ENCODE measurements at regions of chr3 and their contacts with region 1.

Region 1: DNA sequence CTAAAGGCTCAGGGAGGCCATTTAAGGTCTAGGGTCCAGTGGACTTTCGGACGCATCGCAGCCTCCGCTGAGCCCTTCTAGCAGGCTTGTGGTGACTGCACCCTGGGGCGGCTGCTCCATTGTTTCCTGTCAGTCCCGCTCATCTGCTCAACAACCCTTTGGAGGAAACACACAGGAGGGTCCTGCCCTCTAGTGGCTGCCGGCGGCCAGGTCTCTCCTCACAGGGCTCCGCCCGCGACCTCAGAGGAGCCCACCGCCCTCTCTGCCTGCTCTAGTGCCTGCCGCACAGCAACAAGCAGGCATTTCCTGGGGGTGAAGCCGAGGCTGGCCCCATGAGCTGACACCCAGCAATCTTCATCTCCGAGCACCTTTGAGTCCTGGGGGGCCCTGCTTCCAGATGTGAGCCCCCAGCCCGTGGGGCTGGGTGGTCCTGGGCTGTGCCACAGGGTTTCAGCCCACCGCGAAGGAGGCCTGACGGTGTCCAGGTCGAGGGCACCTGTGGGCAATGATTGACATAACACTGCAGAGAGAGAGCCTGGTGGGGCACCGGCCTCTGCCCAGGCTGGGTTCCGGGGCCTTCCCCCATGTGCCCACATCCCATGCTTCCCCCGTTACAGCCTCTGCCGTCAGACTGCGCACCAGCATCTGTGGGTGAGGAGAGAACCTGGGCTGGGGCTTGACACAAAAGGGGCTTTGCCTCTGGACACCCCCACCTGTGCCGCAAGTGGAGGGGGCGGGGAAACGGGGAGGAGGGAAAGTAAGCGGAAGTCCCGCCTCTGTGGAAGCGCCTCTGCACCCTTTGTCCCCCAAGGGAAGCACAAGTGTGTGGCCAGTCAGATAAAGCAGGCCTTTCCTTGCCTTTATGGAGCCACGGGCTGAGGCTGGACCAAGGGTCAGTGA is 27.0 kb upstream of the SFMBT1 start:
- DNase-seq: peak; percentile 74 to 92 (median 89)
- ATAC-seq: peak; percentile 89
- H3K4me3 ChIP-seq: peak overlapping the region; percentile 72 to 86
- H3K4me3 Mint-ChIP-seq: peak overlapping the region; percentile 89
- H3K27ac ChIP-seq: peak overlapping the region; percentile 65 to 79
- H3K27ac Mint-ChIP-seq: peak overlapping the region; percentile 95
- H3K4me1 ChIP-seq: peaks cover 16% of the 10 kb centered on the region
- H3K4me1 Mint-ChIP-seq: peaks cover 17% of the 10 kb centered on the region
- H3K27me3 ChIP-seq: no peaks in the 10 kb centered on the region
- H3K27me3 Mint-ChIP-seq: no peaks in the 10 kb centered on the region
- CTCF ChIP-seq: peak; percentile 78

Region 2: DNA sequence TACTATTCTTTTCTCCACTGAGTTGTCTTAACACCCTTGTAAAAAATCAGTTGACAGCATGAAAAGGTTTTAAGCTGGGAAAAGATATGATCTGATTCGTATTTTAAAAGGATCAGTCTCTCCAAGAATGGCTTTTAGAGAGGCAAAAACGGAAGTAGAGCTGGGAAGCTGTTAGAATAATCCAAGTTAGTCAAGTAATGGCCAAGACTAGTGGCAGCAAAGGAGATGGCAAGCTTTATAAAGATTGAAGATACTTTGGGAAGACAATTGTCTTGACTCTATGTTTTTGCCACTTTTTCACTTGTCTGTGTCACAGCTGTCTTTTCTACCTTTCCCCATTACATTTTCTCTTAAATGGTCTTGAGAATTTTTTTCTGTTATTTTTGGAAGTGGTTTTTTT is 1931.3 kb before region 1 on chr3:
- CTCF ChIA-PET with region 1: no interaction called
- POLR2A ChIA-PET with region 1: no interaction called
- intact Hi-C with region 1: no loop called
- DNase-seq: no peak
- ATAC-seq: no peak
- H3K4me3 ChIP-seq: no peak overlapping the region
- H3K4me3 Mint-ChIP-seq: no peak overlapping the region
- H3K27ac ChIP-seq: no peak overlapping the region
- H3K27ac Mint-ChIP-seq: peak overlapping the region; percentile 37
- H3K4me1 ChIP-seq: peaks cover 8% of the 10 kb centered on the region
- H3K4me1 Mint-ChIP-seq: peaks cover 13% of the 10 kb centered on the region
- H3K27me3 ChIP-seq: no peaks in the 10 kb centered on the region
- H3K27me3 Mint-ChIP-seq: no peaks in the 10 kb centered on the region
- CTCF ChIP-seq: no peak

Region 3: GRCh38 chr3:52770496-52771333 is 302.2 kb before region 1 on chr3 and contains the start of gene NEK4:
- CTCF ChIA-PET with region 1: interaction called, 3 read pairs
- POLR2A ChIA-PET with region 1: no interaction called
- intact Hi-C with region 1: loop called in 1 of 2 experiments (anchors 1 kb)
- DNase-seq: peak; percentile 49 to 92 (median 84)
- ATAC-seq: peak; percentile 89
- H3K4me3 ChIP-seq: peak within 1 kb of the TSS; percentile 60 to 81
- H3K4me3 Mint-ChIP-seq: peak within 1 kb of the TSS; percentile 98
- H3K27ac ChIP-seq: peak within 1 kb of the TSS; percentile 42 to 68
- H3K27ac Mint-ChIP-seq: peak within 1 kb of the TSS; percentile 93
- H3K4me1 ChIP-seq: peaks cover 9% of the 10 kb centered on the region
- H3K4me1 Mint-ChIP-seq: peaks cover 19% of the 10 kb centered on the region
- H3K27me3 ChIP-seq: no peaks in the 10 kb centered on the region
- H3K27me3 Mint-ChIP-seq: no peaks in the 10 kb centered on the region
- CTCF ChIP-seq: no peak
- total RNA-seq, gene NEK4: 5.1 to 5.6 TPM

Region 4: GRCh38 chr3:52851348-52851747 is 221.6 kb before region 1 on chr3:
- CTCF ChIA-PET with region 1: interaction called, 4 read pairs
- POLR2A ChIA-PET with region 1: no interaction called
- intact Hi-C with region 1: loop called (anchors 1 kb)
- DNase-seq: peak in 4 of 9 experiments; percentile 10 to 43 (median 30)
- ATAC-seq: peak; percentile 48
- H3K4me3 ChIP-seq: no peak overlapping the region
- H3K4me3 Mint-ChIP-seq: no peak overlapping the region
- H3K27ac ChIP-seq: no peak overlapping the region
- H3K27ac Mint-ChIP-seq: no peak overlapping the region
- H3K4me1 ChIP-seq: no peaks in the 10 kb centered on the region
- H3K4me1 Mint-ChIP-seq: no peaks in the 10 kb centered on the region
- H3K27me3 ChIP-seq: no peaks in the 10 kb centered on the region
- H3K27me3 Mint-ChIP-seq: no peaks in the 10 kb centered on the region
- CTCF ChIP-seq: no peak

Region 5: DNA sequence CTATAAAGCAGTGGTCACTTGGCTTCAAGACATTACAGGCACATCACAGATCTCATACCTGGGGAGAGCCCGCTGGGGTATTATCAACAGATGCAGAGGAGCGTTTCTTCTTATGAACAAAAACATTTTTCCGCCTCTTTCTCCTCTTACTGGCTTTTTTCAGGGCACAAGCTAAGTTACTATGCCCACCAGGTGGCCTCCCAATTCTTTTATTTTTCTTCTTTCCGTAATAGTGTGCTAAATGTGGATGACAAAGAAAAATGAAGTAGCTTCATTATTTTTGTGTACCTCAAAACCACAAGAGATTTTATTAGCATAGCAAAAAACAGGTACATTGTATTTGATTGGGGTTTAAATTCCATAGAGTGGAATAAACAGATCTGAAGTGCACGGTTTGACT is 165.4 kb before region 1 on chr3:
- CTCF ChIA-PET with region 1: interaction called, 3 read pairs
- POLR2A ChIA-PET with region 1: no interaction called
- intact Hi-C with region 1: loop called in 1 of 2 experiments (anchors 1 kb)
- DNase-seq: no peak
- ATAC-seq: no peak
- H3K4me3 ChIP-seq: no peak overlapping the region
- H3K4me3 Mint-ChIP-seq: no peak overlapping the region
- H3K27ac ChIP-seq: no peak overlapping the region
- H3K27ac Mint-ChIP-seq: no peak overlapping the region
- H3K4me1 ChIP-seq: no peaks in the 10 kb centered on the region
- H3K4me1 Mint-ChIP-seq: no peaks in the 10 kb centered on the region
- H3K27me3 ChIP-seq: no peaks in the 10 kb centered on the region
- H3K27me3 Mint-ChIP-seq: no peaks in the 10 kb centered on the region
- CTCF ChIP-seq: peak; percentile 21

Region 6: DNA sequence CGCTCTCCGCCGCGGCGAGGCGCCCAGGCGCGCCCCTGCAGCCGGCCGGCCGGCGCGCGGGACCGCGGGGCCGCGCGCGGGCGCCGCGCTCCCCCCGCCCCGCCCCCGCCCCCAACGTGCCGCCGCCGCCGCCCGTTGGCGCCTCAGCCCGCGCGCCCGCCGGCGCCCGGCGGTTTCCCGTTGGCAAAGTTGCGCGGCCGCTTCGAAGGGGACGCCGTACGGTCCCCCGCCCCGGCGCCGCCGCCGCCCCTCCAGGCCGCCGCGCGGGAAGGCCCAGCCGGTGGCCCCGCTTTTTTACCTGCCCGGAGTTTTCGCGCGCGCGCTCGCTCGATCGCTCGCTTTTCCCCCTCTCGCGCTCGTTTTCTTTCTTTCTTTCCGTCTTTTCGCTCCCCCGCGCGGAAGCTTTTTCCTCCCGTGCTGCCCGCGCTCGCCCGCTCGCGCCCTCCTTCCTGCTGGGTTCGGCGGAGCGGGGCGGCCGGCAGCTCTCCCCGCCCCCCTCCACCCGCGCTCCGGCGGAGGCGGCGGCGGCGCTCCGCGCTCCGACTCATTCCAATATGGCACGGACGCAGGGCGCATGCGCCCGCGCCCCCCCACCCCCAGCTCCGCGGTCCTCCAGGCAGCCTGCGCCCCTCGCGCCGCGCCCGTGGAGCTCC is 27.3 kb before region 1 on chr3 and contains the start of gene SFMBT1:
- CTCF ChIA-PET with region 1: interaction called, 5 read pairs
- POLR2A ChIA-PET with region 1: interaction called, 3 read pairs
- intact Hi-C with region 1: loop called (anchors 1 kb)
- DNase-seq: peak; percentile 52 to 91 (median 78)
- ATAC-seq: peak; percentile 49
- H3K4me3 ChIP-seq: peak within 1 kb of the TSS; percentile 85 to 88
- H3K4me3 Mint-ChIP-seq: peak within 1 kb of the TSS; percentile 98
- H3K27ac ChIP-seq: peak within 1 kb of the TSS; percentile 81 to 83
- H3K27ac Mint-ChIP-seq: peak within 1 kb of the TSS; percentile 99
- H3K4me1 ChIP-seq: peaks cover 37% of the 10 kb centered on the region
- H3K4me1 Mint-ChIP-seq: peaks cover 35% of the 10 kb centered on the region
- H3K27me3 ChIP-seq: no peaks in the 10 kb centered on the region
- H3K27me3 Mint-ChIP-seq: no peaks in the 10 kb centered on the region
- CTCF ChIP-seq: no peak
- total RNA-seq, gene SFMBT1: 23.6 to 26.2 TPM